CD4-positive, alpha-beta T cell (primary cell): ENCODE measurements at regions of chr5 and their contacts with region 1.

Region 1: DNA sequence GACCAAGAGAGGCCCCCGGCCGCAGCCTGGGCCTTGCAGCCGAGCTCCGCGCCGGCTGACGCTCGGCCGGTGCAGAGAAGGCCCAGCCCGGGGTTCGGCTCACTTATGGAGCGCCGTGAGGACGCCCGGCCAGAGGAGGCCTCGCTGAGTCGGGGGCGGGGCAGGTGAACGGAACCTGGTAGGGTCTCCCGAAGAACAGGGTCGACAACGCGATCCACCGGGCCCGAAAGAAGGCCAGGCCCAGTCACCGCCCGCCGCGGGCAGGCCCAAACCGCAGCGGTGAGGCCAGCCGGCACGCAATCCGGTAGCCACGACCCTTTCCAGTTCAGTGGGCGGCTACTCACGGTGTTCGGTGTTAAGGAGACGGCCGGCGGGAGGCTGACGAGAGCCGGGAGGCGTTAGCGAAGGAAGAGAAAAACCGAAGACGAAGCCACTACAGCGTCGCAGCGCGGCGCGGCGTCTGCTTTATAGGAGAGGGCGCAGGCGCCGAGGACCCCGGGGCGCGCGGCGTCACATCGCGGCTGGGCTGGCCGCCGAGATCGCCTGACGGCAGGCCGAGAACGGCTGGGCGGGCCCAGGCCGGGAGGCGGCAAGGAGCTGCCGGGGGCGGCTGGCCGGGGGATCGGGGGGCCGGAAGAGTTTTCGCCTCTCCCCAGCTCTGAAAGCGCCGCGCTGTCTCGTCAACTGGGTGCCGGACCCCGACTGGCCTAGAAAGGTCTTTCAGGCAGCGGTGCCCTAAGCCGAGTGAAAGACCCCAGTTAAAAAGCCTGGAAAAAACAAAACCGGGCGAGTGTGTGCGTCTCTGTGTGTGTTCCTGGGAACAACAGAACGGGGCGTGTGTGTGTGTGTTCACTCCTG is at the start of gene SKP1:
- DNase-seq: peak; percentile 76 to 94 (median 86)
- ATAC-seq: peak; percentile 83
- H3K4me3 ChIP-seq: peak within 1 kb of the TSS; percentile 98
- H3K4me3 Mint-ChIP-seq: peak within 1 kb of the TSS; percentile 97
- H3K27ac ChIP-seq: peak within 1 kb of the TSS; percentile 98 to 99
- H3K27ac Mint-ChIP-seq: peak within 1 kb of the TSS; percentile 98
- H3K4me1 ChIP-seq: peaks cover 19% of the 10 kb centered on the region
- H3K4me1 Mint-ChIP-seq: peaks cover 36% of the 10 kb centered on the region
- H3K27me3 ChIP-seq: no peaks in the 10 kb centered on the region
- H3K27me3 Mint-ChIP-seq: no peaks in the 10 kb centered on the region
- CTCF ChIP-seq: no peak
- total RNA-seq, gene SKP1: 303 to 314 TPM

Region 2: DNA sequence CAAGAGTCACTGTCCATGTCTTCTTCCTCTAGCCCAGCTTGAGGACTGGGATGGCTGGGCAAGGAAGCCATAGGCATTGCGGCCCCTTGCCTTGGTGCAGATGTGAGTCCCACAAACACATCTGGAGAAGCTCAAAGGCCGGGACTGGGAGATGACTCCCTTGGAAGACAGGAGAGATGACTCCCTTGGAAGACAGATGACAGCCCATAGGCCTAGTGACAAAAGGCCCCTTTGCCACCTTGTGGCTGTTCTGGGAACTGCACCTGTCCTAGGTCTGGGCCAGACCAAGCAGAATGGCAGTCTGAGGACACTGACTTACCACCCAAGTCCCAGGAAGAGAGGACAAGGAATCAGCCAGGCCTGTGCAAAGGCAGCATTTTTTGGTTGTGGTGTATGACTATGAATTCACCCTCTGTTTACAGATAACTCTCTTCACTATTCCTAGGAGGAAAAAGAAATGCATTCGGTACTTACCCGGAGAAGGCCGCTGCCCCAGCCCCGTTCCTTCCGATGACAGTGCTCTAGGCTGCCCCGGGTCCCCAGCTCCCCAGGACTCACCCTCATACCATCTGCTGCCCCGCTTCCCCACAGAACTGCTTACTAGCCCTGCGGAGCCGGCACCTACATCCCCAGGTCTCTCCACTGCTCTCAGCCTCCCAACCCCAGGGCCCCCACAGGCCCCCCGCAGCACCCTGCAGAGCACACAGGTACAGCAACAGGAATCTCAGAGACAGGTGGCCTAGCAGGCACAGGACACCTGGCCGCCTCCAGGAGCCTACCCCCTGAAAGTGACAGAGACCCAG is 30.8 kb before region 1 on chr5:
- CTCF ChIA-PET with region 1: no interaction called
- POLR2A ChIA-PET with region 1: interaction called, 142 read pairs
- intact Hi-C with region 1: no loop called
- DNase-seq: peak; percentile 73 to 89 (median 84)
- ATAC-seq: peak; percentile 71
- H3K4me3 ChIP-seq: no peak overlapping the region
- H3K4me3 Mint-ChIP-seq: peak overlapping the region; percentile 46
- H3K27ac ChIP-seq: peak overlapping the region in 1 of 2 donors; percentile 48
- H3K27ac Mint-ChIP-seq: peak overlapping the region; percentile 98
- H3K4me1 ChIP-seq: peaks cover 50% of the 10 kb centered on the region
- H3K4me1 Mint-ChIP-seq: peaks cover 64% of the 10 kb centered on the region
- H3K27me3 ChIP-seq: no peaks in the 10 kb centered on the region
- H3K27me3 Mint-ChIP-seq: no peaks in the 10 kb centered on the region
- CTCF ChIP-seq: peak; percentile 95

Region 3: DNA sequence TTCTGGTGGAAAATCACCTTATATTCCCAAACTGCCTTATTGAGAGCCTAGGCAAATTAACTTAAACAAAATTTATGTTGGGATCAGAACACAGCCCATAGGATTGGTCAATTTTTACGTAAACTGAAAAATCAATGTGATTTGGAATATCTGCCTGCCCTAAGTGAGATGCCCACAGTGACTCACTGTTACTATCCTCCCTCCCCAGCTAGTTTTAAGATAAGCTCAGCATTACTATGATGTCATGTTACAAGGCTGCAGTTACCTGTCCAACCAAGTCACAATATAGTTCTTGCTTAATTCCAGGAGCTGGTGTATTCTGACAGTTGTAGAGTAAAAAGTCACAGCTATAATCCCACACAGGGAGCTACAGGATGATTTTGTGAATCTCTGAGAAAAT is 23.1 kb before region 1 on chr5:
- CTCF ChIA-PET with region 1: no interaction called
- POLR2A ChIA-PET with region 1: interaction called, 142 read pairs
- intact Hi-C with region 1: loop called in 1 of 2 experiments (anchors 2 kb)
- DNase-seq: no peak
- ATAC-seq: no peak
- H3K4me3 ChIP-seq: no peak overlapping the region
- H3K4me3 Mint-ChIP-seq: no peak overlapping the region
- H3K27ac ChIP-seq: no peak overlapping the region
- H3K27ac Mint-ChIP-seq: peak overlapping the region; percentile 89
- H3K4me1 ChIP-seq: peaks cover 37% of the 10 kb centered on the region
- H3K4me1 Mint-ChIP-seq: peaks cover 92% of the 10 kb centered on the region
- H3K27me3 ChIP-seq: no peaks in the 10 kb centered on the region
- H3K27me3 Mint-ChIP-seq: no peaks in the 10 kb centered on the region
- CTCF ChIP-seq: no peak

Region 4: DNA sequence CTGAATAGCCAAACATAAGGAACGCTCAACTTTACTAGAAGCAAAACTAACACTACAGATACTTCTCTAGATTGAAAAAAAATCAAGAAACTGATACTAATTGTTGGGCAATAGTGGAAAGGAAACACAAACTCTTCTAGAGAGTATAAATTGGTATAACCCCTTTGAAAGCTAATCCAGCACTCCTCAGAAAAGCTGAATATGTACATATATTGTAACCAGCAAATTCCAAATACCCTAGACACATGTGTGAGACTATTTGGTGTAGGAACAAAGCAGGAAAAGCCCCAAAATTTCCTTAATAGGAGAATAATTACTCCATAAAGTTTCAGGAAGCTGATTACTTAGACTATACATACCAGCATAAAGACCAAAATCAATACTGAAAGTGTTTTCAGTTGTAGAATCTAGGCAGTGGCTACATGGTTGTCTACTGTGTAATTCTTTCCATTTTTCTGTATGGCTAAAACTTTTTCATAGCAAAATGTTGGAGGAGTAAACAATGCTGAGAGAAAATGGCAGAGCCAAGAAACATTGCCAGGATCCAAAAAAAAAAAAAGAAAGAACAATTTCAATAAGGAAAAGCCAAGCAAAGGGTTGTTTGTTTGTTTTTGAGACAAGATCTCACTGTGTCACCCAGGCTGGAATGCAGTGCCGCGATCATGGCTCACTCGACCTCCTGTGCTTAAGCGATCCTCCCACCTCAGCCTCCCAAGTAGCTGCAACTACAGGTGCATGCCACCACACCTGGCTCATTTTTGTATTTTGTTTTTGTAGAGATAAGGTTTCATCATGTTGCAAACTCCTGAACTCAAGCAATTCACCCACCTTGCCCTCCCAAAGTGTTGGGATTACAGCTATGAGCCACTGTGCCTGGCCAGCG is 15.0 kb before region 1 on chr5:
- CTCF ChIA-PET with region 1: no interaction called
- POLR2A ChIA-PET with region 1: interaction called, 142 read pairs
- intact Hi-C with region 1: loop called (anchors 1 to 2 kb)
- DNase-seq: no peak
- ATAC-seq: no peak
- H3K4me3 ChIP-seq: no peak overlapping the region
- H3K4me3 Mint-ChIP-seq: no peak overlapping the region
- H3K27ac ChIP-seq: no peak overlapping the region
- H3K27ac Mint-ChIP-seq: peak overlapping the region; percentile 26
- H3K4me1 ChIP-seq: peaks cover 13% of the 10 kb centered on the region
- H3K4me1 Mint-ChIP-seq: peaks cover 54% of the 10 kb centered on the region
- H3K27me3 ChIP-seq: no peaks in the 10 kb centered on the region
- H3K27me3 Mint-ChIP-seq: no peaks in the 10 kb centered on the region
- CTCF ChIP-seq: no peak

Region 5: GRCh38 chr5:134964359-134965270 is 787.9 kb after region 1 on chr5:
- CTCF ChIA-PET with region 1: no interaction called
- POLR2A ChIA-PET with region 1: no interaction called
- intact Hi-C with region 1: no loop called
- DNase-seq: peak in 5 of 14 experiments; percentile 10 to 64 (median 53)
- ATAC-seq: peak; percentile 91
- H3K4me3 ChIP-seq: no peak overlapping the region
- H3K4me3 Mint-ChIP-seq: peak overlapping the region; percentile 53
- H3K27ac ChIP-seq: peak overlapping the region; percentile 3 to 42
- H3K27ac Mint-ChIP-seq: peak overlapping the region; percentile 93
- H3K4me1 ChIP-seq: peaks cover 19% of the 10 kb centered on the region
- H3K4me1 Mint-ChIP-seq: peaks cover 39% of the 10 kb centered on the region
- H3K27me3 ChIP-seq: no peaks in the 10 kb centered on the region
- H3K27me3 Mint-ChIP-seq: no peaks in the 10 kb centered on the region
- CTCF ChIP-seq: no peak